ENCODE measurements at regions of chr1 and their contacts with region 1.

Region 1: GRCh38 chr1:9428601-9429341 is 110.5 kb upstream of the SLC25A33 start:
- DNase-seq: peak; percentile 96 to 100 (median 99)
- ATAC-seq: peak; percentile 90
- H3K4me3 ChIP-seq: peak overlapping the region; percentile 80
- H3K4me3 Mint-ChIP-seq: peak overlapping the region; percentile 80 to 100 (median 96)
- H3K27ac ChIP-seq: peak overlapping the region; percentile 88
- H3K27ac Mint-ChIP-seq: peak overlapping the region; percentile 92 to 100 (median 98)
- H3K4me1 ChIP-seq: peaks cover 28 to 42% of the 10 kb centered on the region in 2 donors
- H3K4me1 Mint-ChIP-seq: peaks cover 34 to 64% (median 56%) of the 10 kb centered on the region in 7 donors
- H3K27me3 ChIP-seq: no peaks in the 10 kb centered on the region
- H3K27me3 Mint-ChIP-seq: peaks cover 0 to 21% (median 0%) of the 10 kb centered on the region in 5 donors

Region 2: GRCh38 chr1:9128520-9129265 is 300.1 kb before region 1 on chr1 and contains the start of gene GPR157:
- CTCF ChIA-PET with region 1: no interaction called
- POLR2A ChIA-PET with region 1: interaction called, 4 read pairs
- intact Hi-C with region 1: loop called in 1 of 2 experiments (anchors 2 kb)
- DNase-seq: peak; percentile 53 to 82 (median 70)
- ATAC-seq: peak; percentile 95
- H3K4me3 ChIP-seq: peak within 1 kb of the TSS; percentile 67
- H3K4me3 Mint-ChIP-seq: peak within 1 kb of the TSS; percentile 85 to 95 (median 90)
- H3K27ac ChIP-seq: peak within 1 kb of the TSS; percentile 67
- H3K27ac Mint-ChIP-seq: peak within 1 kb of the TSS; percentile 59 to 94 (median 87)
- H3K4me1 ChIP-seq: peaks cover 8 to 24% of the 10 kb centered on the region in 2 donors
- H3K4me1 Mint-ChIP-seq: peaks cover 19 to 40% (median 32%) of the 10 kb centered on the region in 7 donors
- H3K27me3 ChIP-seq: no peaks in the 10 kb centered on the region
- H3K27me3 Mint-ChIP-seq: peaks cover 0 to 25% (median 0%) of the 10 kb centered on the region in 5 donors
- total RNA-seq, gene GPR157: 4.0 to 14.1 (median 5.9) TPM

Region 3: GRCh38 chr1:9239622-9240401 is 189.0 kb before region 1 on chr1:
- CTCF ChIA-PET with region 1: no interaction called
- POLR2A ChIA-PET with region 1: interaction called, 3 read pairs
- intact Hi-C with region 1: loop called (anchors 2 to 5 kb)
- DNase-seq: peak in 8 of 9 donors; percentile 33 to 59 (median 42)
- ATAC-seq: peak; percentile 66
- H3K4me3 ChIP-seq: no peak overlapping the region
- H3K4me3 Mint-ChIP-seq: peak overlapping the region; percentile 70 to 81 (median 76)
- H3K27ac ChIP-seq: no peak overlapping the region
- H3K27ac Mint-ChIP-seq: peak overlapping the region in 8 of 9 donors; percentile 26 to 81 (median 70)
- H3K4me1 ChIP-seq: peaks cover 22 to 41% of the 10 kb centered on the region in 2 donors
- H3K4me1 Mint-ChIP-seq: peaks cover 49 to 74% (median 67%) of the 10 kb centered on the region in 7 donors
- H3K27me3 ChIP-seq: no peaks in the 10 kb centered on the region
- H3K27me3 Mint-ChIP-seq: no peaks in the 10 kb centered on the region

Region 4: DNA sequence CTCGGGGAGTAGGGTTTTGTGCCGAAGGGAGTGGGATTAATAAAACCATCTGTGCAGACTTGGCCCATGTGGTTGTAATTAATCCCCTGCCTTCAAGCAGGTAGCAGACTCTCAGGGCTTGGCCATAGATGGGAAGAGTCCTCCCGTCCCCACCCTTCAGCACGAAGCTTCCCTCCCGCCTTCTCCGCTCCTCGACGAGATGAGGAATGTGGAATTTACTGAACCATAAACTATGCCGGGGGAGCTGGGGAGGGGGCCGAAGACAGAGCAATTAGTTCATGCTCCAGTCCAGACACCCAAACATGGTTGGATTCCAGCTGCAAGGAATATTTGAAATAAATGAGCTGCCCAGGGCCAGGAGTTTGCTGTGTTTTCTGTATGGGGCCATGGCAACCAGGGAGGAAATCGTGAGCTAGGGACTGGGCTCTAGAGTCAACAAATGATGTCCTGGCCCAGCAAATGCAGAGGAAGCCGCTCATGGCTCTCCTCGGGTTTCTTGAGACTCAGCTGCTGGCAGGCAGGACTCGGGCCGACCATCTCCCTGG is 57.3 kb before region 1 on chr1:
- CTCF ChIA-PET with region 1: no interaction called
- POLR2A ChIA-PET with region 1: no interaction called
- intact Hi-C with region 1: loop called in 1 of 2 experiments (anchors 10 kb)
- DNase-seq: no peak
- ATAC-seq: no peak
- H3K4me3 ChIP-seq: no peak overlapping the region
- H3K4me3 Mint-ChIP-seq: no peak overlapping the region
- H3K27ac ChIP-seq: no peak overlapping the region
- H3K27ac Mint-ChIP-seq: no peak overlapping the region
- H3K4me1 ChIP-seq: peaks cover 0 to 9% of the 10 kb centered on the region in 2 donors
- H3K4me1 Mint-ChIP-seq: peaks cover 7 to 18% (median 16%) of the 10 kb centered on the region in 7 donors
- H3K27me3 ChIP-seq: no peaks in the 10 kb centered on the region
- H3K27me3 Mint-ChIP-seq: no peaks in the 10 kb centered on the region

Region 5: DNA sequence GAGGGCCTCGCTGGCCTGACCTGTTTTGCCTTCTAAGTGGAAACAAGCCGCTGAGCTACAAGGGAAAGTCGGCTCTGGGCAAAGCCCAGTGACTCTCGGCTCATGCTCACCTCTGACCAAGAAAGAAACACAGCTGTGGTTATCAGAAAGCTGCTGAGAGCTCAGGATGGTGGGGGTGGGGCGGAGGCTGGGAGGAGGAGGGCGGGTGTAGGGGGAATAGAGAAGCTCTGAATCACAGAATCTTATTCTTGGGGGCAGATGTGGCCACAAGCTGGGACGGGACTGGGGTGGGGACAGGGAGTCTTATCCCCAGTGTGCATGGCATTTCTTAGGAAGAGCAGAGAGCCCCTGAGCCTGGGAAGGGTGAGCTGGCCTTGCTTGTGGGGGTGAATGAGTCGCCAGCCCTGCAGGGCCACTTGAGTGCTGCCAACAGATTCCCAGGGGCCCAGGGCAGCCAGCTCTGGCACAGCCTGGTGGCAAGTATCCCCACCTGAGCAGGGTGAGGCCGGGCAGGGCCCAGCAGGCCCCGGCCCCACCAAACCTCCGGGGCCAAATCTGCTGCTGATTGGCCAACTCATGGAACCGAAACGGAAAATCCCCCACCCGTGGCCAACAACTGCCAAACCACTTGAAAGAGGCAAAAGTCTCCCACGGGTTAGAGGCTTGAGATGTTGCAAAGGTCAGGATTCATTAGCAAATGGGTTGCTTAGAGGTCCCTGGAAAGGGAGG is 15.5 kb before region 1 on chr1:
- CTCF ChIA-PET with region 1: no interaction called
- POLR2A ChIA-PET with region 1: interaction called, 12 read pairs
- intact Hi-C with region 1: loop called (anchors 1 kb)
- DNase-seq: peak in 2 of 9 donors; percentile 19 to 65
- ATAC-seq: peak; percentile 69
- H3K4me3 ChIP-seq: peak overlapping the region; percentile 16
- H3K4me3 Mint-ChIP-seq: peak overlapping the region in 8 of 10 donors; percentile 25 to 64 (median 46)
- H3K27ac ChIP-seq: no peak overlapping the region
- H3K27ac Mint-ChIP-seq: peak overlapping the region in 3 of 9 donors; percentile 10 to 50 (median 43)
- H3K4me1 ChIP-seq: peaks cover 19 to 37% of the 10 kb centered on the region in 2 donors
- H3K4me1 Mint-ChIP-seq: peaks cover 15 to 59% (median 51%) of the 10 kb centered on the region in 7 donors
- H3K27me3 ChIP-seq: no peaks in the 10 kb centered on the region
- H3K27me3 Mint-ChIP-seq: peaks cover 0 to 19% (median 0%) of the 10 kb centered on the region in 5 donors

Region 6: GRCh38 chr1:9448132-9449105 is 19.6 kb after region 1 on chr1:
- CTCF ChIA-PET with region 1: no interaction called
- POLR2A ChIA-PET with region 1: no interaction called
- intact Hi-C with region 1: no loop called
- DNase-seq: no peak
- ATAC-seq: no peak
- H3K4me3 ChIP-seq: no peak overlapping the region
- H3K4me3 Mint-ChIP-seq: no peak overlapping the region
- H3K27ac ChIP-seq: no peak overlapping the region
- H3K27ac Mint-ChIP-seq: no peak overlapping the region
- H3K4me1 ChIP-seq: no peaks in the 10 kb centered on the region
- H3K4me1 Mint-ChIP-seq: no peaks in the 10 kb centered on the region
- H3K27me3 ChIP-seq: no peaks in the 10 kb centered on the region
- H3K27me3 Mint-ChIP-seq: peaks cover 0 to 38% (median 0%) of the 10 kb centered on the region in 5 donors

Region 7: GRCh38 chr1:9539165-9539828 is 110.5 kb after region 1 on chr1 and contains the start of gene SLC25A33:
- CTCF ChIA-PET with region 1: no interaction called
- POLR2A ChIA-PET with region 1: no interaction called
- intact Hi-C with region 1: loop called (anchors 1 to 2 kb)
- DNase-seq: peak; percentile 92 to 99 (median 95)
- ATAC-seq: peak; percentile 99
- H3K4me3 ChIP-seq: peak within 1 kb of the TSS; percentile 58
- H3K4me3 Mint-ChIP-seq: peak within 1 kb of the TSS; percentile 86 to 93 (median 90)
- H3K27ac ChIP-seq: peak within 1 kb of the TSS; percentile 73
- H3K27ac Mint-ChIP-seq: peak within 1 kb of the TSS; percentile 85 to 97 (median 91)
- H3K4me1 ChIP-seq: peaks cover 5 to 8% of the 10 kb centered on the region in 2 donors
- H3K4me1 Mint-ChIP-seq: peaks cover 18 to 38% (median 31%) of the 10 kb centered on the region in 7 donors
- H3K27me3 ChIP-seq: no peaks in the 10 kb centered on the region
- H3K27me3 Mint-ChIP-seq: no peaks in the 10 kb centered on the region
- total RNA-seq, gene SLC25A33: 2.5 to 5.8 (median 3.9) TPM

Region 8: GRCh38 chr1:10398734-10399623 is 970.2 kb after region 1 on chr1 and contains the start of gene PGD:
- CTCF ChIA-PET with region 1: no interaction called
- POLR2A ChIA-PET with region 1: no interaction called
- intact Hi-C with region 1: loop called in 1 of 2 experiments (anchors 2 kb)
- DNase-seq: peak; percentile 87 to 98 (median 94)
- ATAC-seq: peak; percentile 99
- H3K4me3 ChIP-seq: peak within 1 kb of the TSS; percentile 95
- H3K4me3 Mint-ChIP-seq: peak within 1 kb of the TSS; percentile 87 to 97 (median 96)
- H3K27ac ChIP-seq: peak within 1 kb of the TSS; percentile 86
- H3K27ac Mint-ChIP-seq: peak within 1 kb of the TSS; percentile 63 to 94 (median 82)
- H3K4me1 ChIP-seq: peaks cover 4 to 7% of the 10 kb centered on the region in 2 donors
- H3K4me1 Mint-ChIP-seq: peaks cover 10 to 30% (median 25%) of the 10 kb centered on the region in 7 donors
- H3K27me3 ChIP-seq: no peaks in the 10 kb centered on the region
- H3K27me3 Mint-ChIP-seq: no peaks in the 10 kb centered on the region
- total RNA-seq, gene PGD: 42.0 to 110 (median 48.5) TPM